Mammary epithelial cell (primary cell): ENCODE measurements at regions of chr12 and their contacts with region 1.

Region 1: GRCh38 chr12:13255792-13256691 is 59.5 kb downstream of the EMP1 start:
- DNase-seq: peak; percentile 90
- H3K4me3 ChIP-seq: peak overlapping the region; percentile 19 to 38 (median 33)
- H3K27ac ChIP-seq: no peak overlapping the region
- H3K4me1 ChIP-seq: peaks cover 13% of the 10 kb centered on the region
- H3K27me3 ChIP-seq: no peaks in the 10 kb centered on the region
- CTCF ChIP-seq: peak; percentile 99

Region 2: GRCh38 chr12:13278249-13278787 is 22.3 kb after region 1 on chr12:
- CTCF ChIA-PET with region 1: no interaction called
- dilution Hi-C with region 1: no loop called
- in situ Hi-C with region 1: no loop called
- intact Hi-C with region 1: no loop called
- DNase-seq: peak; percentile 45
- H3K4me3 ChIP-seq: no peak overlapping the region
- H3K27ac ChIP-seq: no peak overlapping the region
- H3K4me1 ChIP-seq: no peaks in the 10 kb centered on the region
- H3K27me3 ChIP-seq: peaks cover 2% of the 10 kb centered on the region
- CTCF ChIP-seq: peak; percentile 61 to 96

Region 3: DNA sequence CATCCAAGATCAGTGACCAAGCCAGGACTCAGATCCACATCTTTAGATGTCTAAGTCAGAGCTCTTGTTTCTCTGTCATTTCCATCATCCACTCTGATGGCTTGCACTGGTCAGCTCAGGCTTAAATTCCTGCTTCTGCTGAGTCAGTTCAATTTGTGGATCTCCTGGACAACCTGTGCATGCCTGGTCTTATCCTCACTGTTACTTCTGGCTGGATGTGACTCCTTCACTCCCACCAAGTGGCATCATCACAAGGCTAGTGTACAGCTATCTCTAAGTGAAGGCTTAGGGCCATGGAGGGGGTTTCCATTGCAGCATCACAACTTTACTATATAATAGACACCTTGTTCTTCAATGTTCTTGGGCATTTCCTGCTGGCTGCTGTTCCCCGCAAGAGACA is 43.4 kb after region 1 on chr12:
- CTCF ChIA-PET with region 1: no interaction called
- dilution Hi-C with region 1: no loop called
- in situ Hi-C with region 1: no loop called
- intact Hi-C with region 1: no loop called
- DNase-seq: peak; percentile 78
- H3K4me3 ChIP-seq: no peak overlapping the region
- H3K27ac ChIP-seq: no peak overlapping the region
- H3K4me1 ChIP-seq: no peaks in the 10 kb centered on the region
- H3K27me3 ChIP-seq: no peaks in the 10 kb centered on the region
- CTCF ChIP-seq: no peak

Region 4: DNA sequence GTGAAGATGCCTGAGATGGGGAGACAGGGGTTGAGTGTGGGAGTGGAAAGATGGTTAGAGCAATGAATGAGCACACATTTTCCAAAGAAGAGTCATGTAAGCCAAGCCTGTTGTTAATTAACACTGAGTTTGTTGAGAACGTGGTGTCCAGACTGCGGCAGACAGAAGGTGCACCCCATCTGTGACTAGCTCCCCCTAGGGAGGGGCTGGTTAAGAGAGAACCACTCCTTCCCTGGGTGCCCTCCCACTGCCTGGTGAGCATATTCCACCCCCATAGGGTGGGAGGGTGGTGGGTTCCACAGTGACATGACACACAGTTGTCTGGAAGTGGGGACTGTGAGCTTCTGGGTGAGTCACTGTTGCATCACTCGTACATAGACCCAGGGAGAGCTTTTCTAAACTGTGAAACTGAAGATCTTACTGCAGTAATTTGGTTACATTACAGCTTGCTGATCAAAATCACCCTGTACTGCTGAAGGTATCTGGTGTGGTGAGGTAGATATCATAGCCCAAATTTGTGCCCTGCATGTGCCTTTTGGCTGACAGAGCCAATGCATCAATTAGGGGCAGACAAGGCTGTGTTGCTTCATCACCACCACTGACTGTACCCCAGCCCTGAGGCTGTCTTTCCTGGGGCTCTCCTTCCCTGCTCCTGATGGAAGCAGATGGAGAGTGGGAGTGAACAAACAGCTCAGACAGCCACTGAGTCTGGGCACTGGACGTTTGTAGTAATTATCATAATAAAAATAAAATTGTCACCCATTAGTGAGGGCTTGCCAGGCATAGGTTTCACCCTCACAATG is 91.4 kb after region 1 on chr12:
- CTCF ChIA-PET with region 1: no interaction called
- dilution Hi-C with region 1: no loop called
- in situ Hi-C with region 1: no loop called
- intact Hi-C with region 1: loop called (anchors 5 kb)
- DNase-seq: peak; percentile 87
- H3K4me3 ChIP-seq: no peak overlapping the region
- H3K27ac ChIP-seq: peak overlapping the region; percentile 16
- H3K4me1 ChIP-seq: peaks cover 28% of the 10 kb centered on the region
- H3K27me3 ChIP-seq: no peaks in the 10 kb centered on the region
- CTCF ChIP-seq: no peak

Region 5: GRCh38 chr12:13534645-13535398 is 278.8 kb after region 1 on chr12:
- CTCF ChIA-PET with region 1: interaction called, 4 read pairs
- dilution Hi-C with region 1: no loop called
- in situ Hi-C with region 1: no loop called
- intact Hi-C with region 1: loop called (anchors 1 kb)
- DNase-seq: peak; percentile 21
- H3K4me3 ChIP-seq: no peak overlapping the region
- H3K27ac ChIP-seq: no peak overlapping the region
- H3K4me1 ChIP-seq: no peaks in the 10 kb centered on the region
- H3K27me3 ChIP-seq: no peaks in the 10 kb centered on the region
- CTCF ChIP-seq: peak; percentile 98

Region 6: DNA sequence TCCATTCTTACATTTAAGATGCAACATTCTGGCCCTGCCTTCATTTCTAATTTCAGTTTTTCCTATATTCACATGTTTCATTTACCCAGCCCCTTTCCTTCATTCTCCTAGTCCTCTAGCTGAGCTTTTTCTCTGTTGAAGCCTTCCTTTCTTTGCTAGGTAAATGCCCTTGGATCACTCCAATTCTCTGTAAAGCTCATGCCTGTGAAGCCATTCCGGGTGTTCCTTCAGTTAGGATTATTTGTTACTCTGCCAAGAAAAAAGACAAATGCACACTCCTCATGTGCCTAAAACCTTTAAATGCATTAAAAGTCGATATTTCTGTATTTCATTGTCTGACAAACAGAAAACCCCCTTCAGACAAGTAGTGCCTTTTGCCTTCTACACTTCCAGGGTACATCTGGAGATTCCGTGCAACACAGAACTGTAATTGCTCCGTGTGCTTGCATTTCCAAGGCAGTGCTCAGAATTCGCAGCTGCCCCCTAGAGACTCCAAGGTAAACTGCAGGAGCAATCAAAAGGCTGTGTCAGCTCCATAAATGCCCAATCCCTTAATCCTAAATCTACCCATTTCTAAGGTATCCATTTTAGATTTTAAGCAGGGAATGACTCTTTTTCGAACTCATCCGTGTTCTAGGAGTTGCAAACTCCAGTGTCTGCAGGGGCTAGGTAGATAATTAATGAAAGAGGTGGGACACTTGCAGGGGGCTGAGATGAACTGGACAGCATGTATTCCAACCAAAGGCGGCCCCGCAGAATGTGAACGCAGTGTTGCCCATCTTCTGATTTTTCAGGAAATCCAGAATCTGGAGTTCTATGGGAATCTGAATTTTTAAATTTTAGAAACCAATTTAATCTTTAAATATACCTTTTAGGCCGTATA is 405.2 kb after region 1 on chr12:
- CTCF ChIA-PET with region 1: interaction called, 6 read pairs
- dilution Hi-C with region 1: no loop called
- in situ Hi-C with region 1: no loop called
- intact Hi-C with region 1: loop called (anchors 1 kb)
- DNase-seq: peak; percentile 30
- H3K4me3 ChIP-seq: no peak overlapping the region
- H3K27ac ChIP-seq: no peak overlapping the region
- H3K4me1 ChIP-seq: no peaks in the 10 kb centered on the region
- H3K27me3 ChIP-seq: no peaks in the 10 kb centered on the region
- CTCF ChIP-seq: peak; percentile 93 to 95

Region 7: DNA sequence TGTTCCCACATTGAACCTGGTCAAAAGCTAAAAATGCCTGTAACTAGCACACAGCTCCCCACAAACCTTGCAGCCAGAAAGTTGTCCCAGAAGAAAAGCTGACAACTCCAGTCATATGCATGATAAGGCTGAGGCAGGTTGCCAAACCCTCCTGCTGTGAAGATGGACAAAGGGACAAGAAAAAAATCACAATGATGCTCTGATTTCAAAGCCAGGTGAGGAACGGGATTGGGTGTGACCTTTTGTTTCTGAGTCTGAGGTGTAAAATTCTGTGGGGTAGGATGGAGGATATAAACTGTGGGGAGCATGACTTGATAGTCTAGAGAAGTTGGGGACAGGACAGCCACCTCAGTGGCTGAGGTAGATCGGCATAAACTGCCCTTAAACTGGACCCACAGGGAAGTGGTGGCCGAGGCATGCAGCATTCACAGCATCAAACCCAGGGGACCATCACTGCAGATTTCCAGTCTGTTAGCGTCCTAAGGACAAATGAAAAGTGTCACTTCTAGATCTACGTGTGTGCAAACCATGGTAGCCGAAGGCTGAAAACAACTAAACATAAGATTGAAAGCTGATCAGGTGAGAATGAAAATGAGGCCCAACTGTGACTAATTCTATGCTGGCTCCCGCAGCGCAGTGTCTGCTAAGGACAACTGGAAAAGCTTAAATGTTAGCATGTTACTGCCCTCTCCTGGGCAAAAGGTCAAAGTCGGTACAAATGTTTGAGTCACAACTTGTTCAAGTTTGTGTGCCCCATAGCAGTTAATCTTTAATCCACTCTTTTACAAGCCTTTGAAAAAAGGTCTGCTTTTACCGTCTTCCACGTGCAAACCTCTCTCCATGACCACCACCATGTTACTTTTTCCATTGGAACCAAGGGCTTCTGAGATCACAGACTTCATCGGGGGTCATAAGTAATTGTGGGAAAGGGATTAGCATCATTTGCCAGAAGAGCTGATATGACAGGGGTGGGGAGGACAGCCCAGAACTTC is 685.5 kb after region 1 on chr12:
- CTCF ChIA-PET with region 1: no interaction called
- dilution Hi-C with region 1: no loop called
- in situ Hi-C with region 1: loop called in 1 of 2 experiments (anchors 25 kb)
- intact Hi-C with region 1: no loop called
- DNase-seq: peak; percentile 46
- H3K4me3 ChIP-seq: no peak overlapping the region
- H3K27ac ChIP-seq: no peak overlapping the region
- H3K4me1 ChIP-seq: no peaks in the 10 kb centered on the region
- H3K27me3 ChIP-seq: no peaks in the 10 kb centered on the region
- CTCF ChIP-seq: peak; percentile 48 to 58

Region 8: GRCh38 chr12:14072987-14073386 is 816.9 kb after region 1 on chr12:
- CTCF ChIA-PET with region 1: no interaction called
- dilution Hi-C with region 1: no loop called
- in situ Hi-C with region 1: no loop called
- intact Hi-C with region 1: no loop called
- DNase-seq: no peak
- H3K4me3 ChIP-seq: no peak overlapping the region
- H3K27ac ChIP-seq: no peak overlapping the region
- H3K4me1 ChIP-seq: peaks cover 3% of the 10 kb centered on the region
- H3K27me3 ChIP-seq: no peaks in the 10 kb centered on the region
- CTCF ChIP-seq: no peak